ENCODE measurements at regions of chr14 and their contacts with region 1.

Region 1: DNA sequence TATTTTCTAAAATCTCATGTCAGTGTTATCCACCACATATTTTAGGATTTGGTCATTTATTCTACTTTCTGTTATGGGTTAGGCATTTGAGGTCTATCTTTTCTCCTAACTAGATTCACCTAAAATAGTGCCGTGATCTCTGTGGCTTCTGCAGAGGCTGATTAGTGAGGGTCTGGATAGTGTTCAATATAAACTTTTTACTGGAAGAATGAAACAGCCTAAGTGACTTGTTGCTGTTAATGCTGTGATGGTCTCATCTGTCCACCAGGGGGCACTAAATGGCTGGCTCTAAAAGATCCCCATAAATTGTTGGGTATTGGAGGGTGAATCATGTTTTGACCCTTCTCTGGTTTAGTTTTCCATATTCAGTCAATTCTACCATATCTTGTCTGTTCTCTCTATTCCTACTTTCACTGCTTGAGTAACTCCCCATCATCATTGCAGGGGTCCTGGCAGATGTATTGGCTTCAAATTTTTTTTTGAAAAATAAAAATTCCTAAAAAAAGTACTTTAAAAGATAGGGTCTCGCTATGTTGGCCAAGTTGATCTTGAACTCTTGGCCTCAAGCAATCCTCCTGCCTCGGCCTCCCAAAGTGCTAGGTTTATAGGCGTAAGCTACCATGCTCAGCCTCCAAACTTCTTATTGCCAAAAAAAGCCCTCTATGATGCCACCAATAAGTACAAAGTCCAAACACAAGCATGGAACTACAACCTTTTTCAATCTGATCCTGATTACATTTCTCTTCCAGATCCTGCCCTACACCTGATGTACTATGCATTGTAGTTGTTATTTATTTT is 6.9 kb downstream of the PABPN1 start:
- DNase-seq: peak in 7 of 10 donors; percentile 59 to 88 (median 74)
- H3K4me3 ChIP-seq: peak overlapping the region in 1 of 59 donors; percentile 1
- H3K27ac ChIP-seq: peak overlapping the region in 20 of 59 donors; percentile 5 to 70 (median 36)
- H3K27me3 ChIP-seq: no peaks in the 10 kb centered on the region
- CTCF ChIP-seq: peak; percentile 85 to 99 (median 94)

Region 2: GRCh38 chr14:23286020-23286905 is 41.9 kb before region 1 on chr14 and contains the start of gene HOMEZ:
- intact Hi-C with region 1: no loop called
- DNase-seq: peak; percentile 99
- H3K4me3 ChIP-seq: peak within 1 kb of the TSS; percentile 57 to 97 (median 89)
- H3K27ac ChIP-seq: peak within 1 kb of the TSS; percentile 79 to 99 (median 96)
- H3K27me3 ChIP-seq: no peaks in the 10 kb centered on the region
- CTCF ChIP-seq: peak in 55 of 56 donors; percentile 31 to 80 (median 59)
- total RNA-seq, gene HOMEZ: 5.4 to 16.5 (median 9.1) TPM

Region 3: GRCh38 chr14:23365603-23366425 is 37.7 kb after region 1 on chr14:
- intact Hi-C with region 1: loop called (anchors 5 kb)
- DNase-seq: peak in 2 of 10 donors; percentile 20 to 32
- H3K4me3 ChIP-seq: peak overlapping the region; percentile 41 to 73 (median 61)
- H3K27ac ChIP-seq: peak overlapping the region; percentile 88 to 99 (median 98)
- H3K27me3 ChIP-seq: peaks cover 0 to 28% (median 7%) of the 10 kb centered on the region in 45 donors
- CTCF ChIP-seq: no peak

Region 4: DNA sequence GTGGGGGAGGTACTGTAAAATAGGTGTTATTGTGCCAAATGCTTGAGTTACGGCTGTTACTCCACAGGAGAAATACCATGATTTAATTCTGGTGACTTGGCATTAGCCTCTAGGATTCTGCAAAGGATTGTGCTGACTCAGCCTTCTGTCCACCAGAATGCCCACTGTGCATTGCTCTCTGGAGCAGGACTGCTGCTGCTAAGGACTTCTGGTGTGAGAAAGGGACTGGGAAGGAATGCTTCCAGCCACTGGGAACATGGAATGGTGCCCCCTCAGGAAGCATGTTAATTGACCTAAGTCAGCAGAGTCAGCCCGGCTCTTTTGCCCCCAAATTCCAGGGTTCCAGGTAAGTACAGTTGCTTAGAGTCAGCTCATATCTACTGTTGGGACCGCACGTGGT is 190.6 kb after region 1 on chr14:
- intact Hi-C with region 1: no loop called
- DNase-seq: peak in 2 of 10 donors; percentile 33 to 63
- H3K4me3 ChIP-seq: peak overlapping the region in 1 of 59 donors; percentile 3
- H3K27ac ChIP-seq: peak overlapping the region in 46 of 59 donors; percentile 4 to 99 (median 53)
- H3K27me3 ChIP-seq: no peaks in the 10 kb centered on the region
- CTCF ChIP-seq: no peak

Region 5: GRCh38 chr14:23562268-23563203 is 234.4 kb after region 1 on chr14:
- intact Hi-C with region 1: loop called (anchors 5 kb)
- DNase-seq: peak in 5 of 10 donors; percentile 61 to 76 (median 68)
- H3K4me3 ChIP-seq: no peak overlapping the region
- H3K27ac ChIP-seq: peak overlapping the region in 55 of 59 donors; percentile 7 to 84 (median 64)
- H3K27me3 ChIP-seq: no peaks in the 10 kb centered on the region
- CTCF ChIP-seq: peak; percentile 88 to 99 (median 94)